CD4-positive, alpha-beta memory T cell (primary cell): ENCODE measurements at regions of chr6 and their contacts with region 1.

Region 1: GRCh38 chr6:158869826-158870648 is 50.9 kb upstream of the EZR start:
- DNase-seq: peak in 3 of 5 donors; percentile 93 to 98 (median 96)
- H3K4me3 ChIP-seq: peak overlapping the region; percentile 55 to 61
- H3K4me3 Mint-ChIP-seq: peak overlapping the region; percentile 89 to 96 (median 92)
- H3K27ac ChIP-seq: peak overlapping the region; percentile 97
- H3K27ac Mint-ChIP-seq: peak overlapping the region; percentile 98 to 100 (median 100)
- H3K4me1 ChIP-seq: peaks cover 20% of the 10 kb centered on the region
- H3K4me1 Mint-ChIP-seq: peaks cover 12 to 39% (median 22%) of the 10 kb centered on the region in 4 donors
- H3K27me3 ChIP-seq: no peaks in the 10 kb centered on the region
- H3K27me3 Mint-ChIP-seq: no peaks in the 10 kb centered on the region

Region 2: GRCh38 chr6:157831424-157832249 is 1038.4 kb before region 1 on chr6:
- CTCF ChIA-PET with region 1: no interaction called
- POLR2A ChIA-PET with region 1: no interaction called
- intact Hi-C with region 1: no loop called
- DNase-seq: no peak
- H3K4me3 ChIP-seq: no peak overlapping the region
- H3K4me3 Mint-ChIP-seq: peak overlapping the region in 6 of 8 donors; percentile 13 to 36 (median 29)
- H3K27ac ChIP-seq: no peak overlapping the region
- H3K27ac Mint-ChIP-seq: peak overlapping the region in 3 of 7 donors; percentile 23 to 54 (median 38)
- H3K4me1 ChIP-seq: peaks cover 45% of the 10 kb centered on the region
- H3K4me1 Mint-ChIP-seq: peaks cover 36 to 71% (median 57%) of the 10 kb centered on the region in 4 donors
- H3K27me3 ChIP-seq: no peaks in the 10 kb centered on the region
- H3K27me3 Mint-ChIP-seq: no peaks in the 10 kb centered on the region

Region 3: DNA sequence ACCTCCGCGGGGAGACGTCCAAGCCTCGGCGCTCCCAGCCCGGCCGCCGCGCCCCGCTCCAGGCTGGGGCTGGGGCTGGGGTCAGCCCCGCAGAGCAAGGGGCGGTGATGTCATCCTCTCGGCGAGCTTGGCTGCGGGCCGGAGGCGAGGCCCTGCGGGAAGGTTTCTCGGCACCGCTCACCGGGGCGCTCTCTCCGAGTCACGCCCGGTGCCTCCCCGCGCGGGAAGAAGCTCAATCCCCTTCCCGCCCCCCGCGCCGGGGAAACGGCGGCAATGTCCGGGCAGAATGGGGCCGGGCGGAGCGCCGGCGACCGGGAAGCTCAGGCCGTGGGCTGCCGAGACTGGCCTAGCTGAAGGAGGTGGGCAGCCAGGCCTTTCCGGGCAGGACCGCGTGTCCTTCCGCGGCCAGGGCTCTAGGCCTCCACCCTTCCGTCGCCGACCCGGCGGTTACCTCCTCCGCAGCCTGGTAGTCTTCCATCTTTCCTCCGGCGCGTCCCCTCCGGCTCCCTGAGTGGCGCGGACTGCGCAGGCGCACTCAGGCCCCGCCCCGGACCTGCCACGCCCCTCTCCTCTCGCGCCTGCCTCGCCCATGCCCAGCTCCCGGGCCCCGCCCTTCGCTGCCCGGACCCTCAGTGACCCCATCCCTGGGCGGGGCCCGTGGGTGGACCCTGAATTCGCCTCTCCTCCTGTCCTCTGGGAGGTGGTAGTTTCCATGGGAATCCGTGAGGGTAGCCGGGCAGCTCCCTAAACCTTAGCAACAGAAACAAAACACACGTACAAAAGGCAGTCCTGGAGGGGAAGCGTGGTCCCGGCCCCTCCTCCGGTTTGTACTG is 225.6 kb before region 1 on chr6 and contains the start of gene DYNLT1:
- CTCF ChIA-PET with region 1: no interaction called
- POLR2A ChIA-PET with region 1: interaction called, 22 read pairs
- intact Hi-C with region 1: no loop called
- DNase-seq: peak; percentile 78 to 95 (median 88)
- H3K4me3 ChIP-seq: peak within 1 kb of the TSS; percentile 84 to 85
- H3K4me3 Mint-ChIP-seq: peak within 1 kb of the TSS; percentile 99 to 100 (median 99)
- H3K27ac ChIP-seq: peak within 1 kb of the TSS; percentile 96
- H3K27ac Mint-ChIP-seq: peak within 1 kb of the TSS; percentile 92 to 100 (median 99)
- H3K4me1 ChIP-seq: peaks cover 58% of the 10 kb centered on the region
- H3K4me1 Mint-ChIP-seq: peaks cover 46 to 82% (median 55%) of the 10 kb centered on the region in 4 donors
- H3K27me3 ChIP-seq: no peaks in the 10 kb centered on the region
- H3K27me3 Mint-ChIP-seq: no peaks in the 10 kb centered on the region
- total RNA-seq, gene DYNLT1: 78.8 to 90.4 TPM

Region 4: GRCh38 chr6:158803733-158804143 is 66.3 kb before region 1 on chr6:
- CTCF ChIA-PET with region 1: interaction called, 7 read pairs
- POLR2A ChIA-PET with region 1: interaction called, 58 read pairs
- intact Hi-C with region 1: no loop called
- DNase-seq: peak; percentile 68 to 78 (median 73)
- H3K4me3 ChIP-seq: peak overlapping the region; percentile 15 to 49
- H3K4me3 Mint-ChIP-seq: peak overlapping the region; percentile 71 to 90 (median 86)
- H3K27ac ChIP-seq: peak overlapping the region; percentile 52
- H3K27ac Mint-ChIP-seq: peak overlapping the region; percentile 85 to 96 (median 92)
- H3K4me1 ChIP-seq: peaks cover 98% of the 10 kb centered on the region
- H3K4me1 Mint-ChIP-seq: peaks cover 76 to 98% (median 86%) of the 10 kb centered on the region in 4 donors
- H3K27me3 ChIP-seq: no peaks in the 10 kb centered on the region
- H3K27me3 Mint-ChIP-seq: no peaks in the 10 kb centered on the region

Region 5: GRCh38 chr6:158825951-158826306 is 44.1 kb before region 1 on chr6:
- CTCF ChIA-PET with region 1: interaction called, 4 read pairs
- POLR2A ChIA-PET with region 1: interaction called, 130 read pairs
- intact Hi-C with region 1: no loop called
- DNase-seq: peak in 1 of 5 donors; percentile 30
- H3K4me3 ChIP-seq: no peak overlapping the region
- H3K4me3 Mint-ChIP-seq: peak overlapping the region in 1 of 8 donors; percentile 1
- H3K27ac ChIP-seq: no peak overlapping the region
- H3K27ac Mint-ChIP-seq: peak overlapping the region in 4 of 7 donors; percentile 38 to 82 (median 69)
- H3K4me1 ChIP-seq: no peaks in the 10 kb centered on the region
- H3K4me1 Mint-ChIP-seq: peaks cover 0 to 8% (median 3%) of the 10 kb centered on the region in 4 donors
- H3K27me3 ChIP-seq: no peaks in the 10 kb centered on the region
- H3K27me3 Mint-ChIP-seq: peaks cover 0 to 3% of the 10 kb centered on the region in 2 donors

Region 6: DNA sequence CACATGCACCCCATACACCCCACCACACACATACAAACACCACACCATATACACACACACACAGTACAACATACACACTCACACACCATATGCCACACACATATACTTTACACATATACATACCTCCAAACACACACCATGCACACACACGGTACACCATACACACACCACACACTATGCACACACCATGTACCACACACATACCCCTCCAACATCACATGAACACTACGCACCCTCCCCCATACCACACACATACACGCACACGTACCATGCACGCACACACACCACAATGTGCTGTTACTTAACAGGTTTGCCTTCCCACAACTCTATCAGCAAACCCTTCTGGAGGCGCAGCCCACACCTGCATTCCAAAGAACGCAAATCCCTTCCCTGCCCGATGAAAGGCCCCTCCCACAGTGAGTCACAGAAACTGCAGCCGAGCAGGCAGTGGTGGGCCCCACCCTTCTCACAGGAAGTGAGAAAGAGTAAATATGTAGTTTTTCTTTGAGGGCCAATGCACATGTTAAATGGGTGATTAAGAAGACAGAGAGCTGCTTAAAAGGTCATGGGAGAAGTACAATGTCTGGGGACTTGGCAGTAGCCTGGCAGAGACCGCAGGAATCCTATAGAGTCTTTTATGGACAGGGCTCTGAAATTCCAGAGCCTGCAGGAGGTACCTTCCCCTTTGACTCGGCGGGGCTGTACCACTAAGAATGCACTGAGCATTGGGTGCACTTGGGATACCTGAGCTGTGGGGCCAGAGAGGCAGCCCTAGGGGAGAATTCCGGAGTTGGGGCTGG is 16.8 kb before region 1 on chr6:
- CTCF ChIA-PET with region 1: interaction called, 58 read pairs
- POLR2A ChIA-PET with region 1: interaction called, 544 read pairs
- intact Hi-C with region 1: loop called (anchors 1 kb)
- DNase-seq: peak; percentile 87 to 97 (median 93)
- H3K4me3 ChIP-seq: peak overlapping the region; percentile 53 to 81
- H3K4me3 Mint-ChIP-seq: no peak overlapping the region
- H3K27ac ChIP-seq: peak overlapping the region; percentile 91
- H3K27ac Mint-ChIP-seq: no peak overlapping the region
- H3K4me1 ChIP-seq: peaks cover 74% of the 10 kb centered on the region
- H3K4me1 Mint-ChIP-seq: peaks cover 27 to 37% (median 29%) of the 10 kb centered on the region in 4 donors
- H3K27me3 ChIP-seq: no peaks in the 10 kb centered on the region
- H3K27me3 Mint-ChIP-seq: no peaks in the 10 kb centered on the region

Region 7: GRCh38 chr6:158958504-158959386 is 88.7 kb after region 1 on chr6:
- CTCF ChIA-PET with region 1: no interaction called
- POLR2A ChIA-PET with region 1: interaction called, 15 read pairs
- intact Hi-C with region 1: no loop called
- DNase-seq: peak in 4 of 5 donors; percentile 13 to 26 (median 24)
- H3K4me3 ChIP-seq: no peak overlapping the region
- H3K4me3 Mint-ChIP-seq: no peak overlapping the region
- H3K27ac ChIP-seq: no peak overlapping the region
- H3K27ac Mint-ChIP-seq: peak overlapping the region in 3 of 7 donors; percentile 1 to 59 (median 52)
- H3K4me1 ChIP-seq: no peaks in the 10 kb centered on the region
- H3K4me1 Mint-ChIP-seq: peaks cover 0 to 13% (median 0%) of the 10 kb centered on the region in 4 donors
- H3K27me3 ChIP-seq: no peaks in the 10 kb centered on the region
- H3K27me3 Mint-ChIP-seq: no peaks in the 10 kb centered on the region

Region 8: DNA sequence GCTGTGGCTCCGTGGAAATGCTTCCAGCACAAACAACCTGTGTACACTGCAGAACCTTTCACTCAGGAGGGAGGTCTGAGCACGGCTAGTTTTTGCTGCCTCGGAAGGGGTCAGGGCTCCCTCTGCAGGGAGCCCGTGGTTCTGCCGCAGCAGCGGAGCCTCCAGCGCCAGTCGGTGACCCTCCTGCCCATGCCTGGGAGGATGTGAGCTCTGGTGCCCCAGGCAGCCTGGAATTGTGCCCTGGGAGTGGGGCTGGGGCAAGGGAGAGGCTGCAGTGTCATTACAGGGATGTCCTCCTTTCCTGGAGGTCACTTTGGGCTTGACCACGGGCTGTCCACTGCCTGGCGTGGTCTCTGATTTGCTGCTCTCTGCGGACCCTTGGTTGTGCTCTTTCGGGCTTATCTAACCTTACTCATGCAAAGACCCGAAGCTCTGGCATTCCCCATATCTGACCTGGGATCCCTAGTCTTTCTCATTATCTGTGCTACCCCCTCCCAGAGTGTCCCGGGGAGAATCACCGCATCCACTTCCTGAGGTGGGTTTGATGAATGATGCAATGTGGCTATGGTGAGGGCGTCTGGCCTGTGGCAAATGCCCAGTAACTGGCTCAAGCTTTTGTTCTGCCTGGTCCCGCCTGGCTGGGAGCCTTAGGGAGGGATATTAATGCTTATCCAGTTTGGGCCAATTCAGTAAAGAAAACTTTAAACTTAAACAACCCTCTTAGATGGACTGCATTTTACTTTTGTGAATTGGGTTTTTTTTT is 234.3 kb after region 1 on chr6:
- CTCF ChIA-PET with region 1: interaction called, 4 read pairs
- POLR2A ChIA-PET with region 1: interaction called, 16 read pairs
- intact Hi-C with region 1: no loop called
- DNase-seq: peak; percentile 75 to 81 (median 78)
- H3K4me3 ChIP-seq: no peak overlapping the region
- H3K4me3 Mint-ChIP-seq: peak overlapping the region; percentile 54 to 82 (median 71)
- H3K27ac ChIP-seq: peak overlapping the region; percentile 25
- H3K27ac Mint-ChIP-seq: peak overlapping the region; percentile 48 to 95 (median 86)
- H3K4me1 ChIP-seq: peaks cover 74% of the 10 kb centered on the region
- H3K4me1 Mint-ChIP-seq: peaks cover 57 to 85% (median 66%) of the 10 kb centered on the region in 4 donors
- H3K27me3 ChIP-seq: no peaks in the 10 kb centered on the region
- H3K27me3 Mint-ChIP-seq: no peaks in the 10 kb centered on the region

Region 9: GRCh38 chr6:159184559-159184958 is 314.5 kb after region 1 on chr6:
- CTCF ChIA-PET with region 1: no interaction called
- POLR2A ChIA-PET with region 1: no interaction called
- intact Hi-C with region 1: no loop called
- DNase-seq: no peak
- H3K4me3 ChIP-seq: no peak overlapping the region
- H3K4me3 Mint-ChIP-seq: no peak overlapping the region
- H3K27ac ChIP-seq: no peak overlapping the region
- H3K27ac Mint-ChIP-seq: no peak overlapping the region
- H3K4me1 ChIP-seq: peaks cover 22% of the 10 kb centered on the region
- H3K4me1 Mint-ChIP-seq: peaks cover 15 to 26% (median 18%) of the 10 kb centered on the region in 4 donors
- H3K27me3 ChIP-seq: no peaks in the 10 kb centered on the region
- H3K27me3 Mint-ChIP-seq: peaks cover 0 to 1% of the 10 kb centered on the region in 2 donors